ENCODE measurements at regions of chr16 and their contacts with region 1.

Region 1: DNA sequence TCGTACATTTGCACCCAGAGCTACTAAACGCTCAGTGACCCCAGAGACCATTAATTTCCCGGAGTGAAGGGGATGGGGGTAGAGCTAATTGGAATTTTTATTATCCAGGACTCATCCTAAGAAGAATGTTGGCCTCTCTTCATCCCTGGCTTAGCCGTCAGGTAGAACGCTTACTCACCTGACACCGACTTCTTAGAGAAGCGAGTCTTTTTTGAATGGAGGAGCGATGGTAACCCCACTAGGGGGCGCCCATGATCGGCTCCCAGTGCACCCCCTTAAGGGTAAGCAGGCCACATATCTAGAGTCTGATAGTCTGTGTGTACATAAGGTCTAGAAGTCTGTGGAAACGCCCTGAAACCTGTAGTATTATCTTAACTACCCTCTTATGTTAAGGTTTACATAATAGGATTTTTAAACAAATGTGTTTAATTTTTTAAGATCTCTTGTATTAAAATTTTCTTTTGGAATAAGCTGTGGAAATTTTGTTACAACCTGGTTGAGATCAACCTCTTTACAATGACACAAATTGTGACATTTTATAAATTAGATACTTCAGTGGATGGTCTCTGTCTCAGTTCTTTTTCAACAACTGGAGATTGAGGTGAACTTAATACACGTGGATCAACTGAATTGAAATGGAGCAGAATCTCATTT is 229.8 kb downstream of the CPPED1 start:
- DNase-seq: peak; percentile 73 to 80 (median 73)
- ATAC-seq: peak; percentile 77 to 85 (median 84)
- H3K4me3 ChIP-seq: no peak overlapping the region
- H3K27ac ChIP-seq: no peak overlapping the region
- H3K4me1 ChIP-seq: peaks cover 0 to 15% (median 4%) of the 10 kb centered on the region in 4 donors
- H3K27me3 ChIP-seq: no peaks in the 10 kb centered on the region
- CTCF ChIP-seq: peak; percentile 71 to 89 (median 84)
- POLR2A ChIP-seq: no peak

Region 2: DNA sequence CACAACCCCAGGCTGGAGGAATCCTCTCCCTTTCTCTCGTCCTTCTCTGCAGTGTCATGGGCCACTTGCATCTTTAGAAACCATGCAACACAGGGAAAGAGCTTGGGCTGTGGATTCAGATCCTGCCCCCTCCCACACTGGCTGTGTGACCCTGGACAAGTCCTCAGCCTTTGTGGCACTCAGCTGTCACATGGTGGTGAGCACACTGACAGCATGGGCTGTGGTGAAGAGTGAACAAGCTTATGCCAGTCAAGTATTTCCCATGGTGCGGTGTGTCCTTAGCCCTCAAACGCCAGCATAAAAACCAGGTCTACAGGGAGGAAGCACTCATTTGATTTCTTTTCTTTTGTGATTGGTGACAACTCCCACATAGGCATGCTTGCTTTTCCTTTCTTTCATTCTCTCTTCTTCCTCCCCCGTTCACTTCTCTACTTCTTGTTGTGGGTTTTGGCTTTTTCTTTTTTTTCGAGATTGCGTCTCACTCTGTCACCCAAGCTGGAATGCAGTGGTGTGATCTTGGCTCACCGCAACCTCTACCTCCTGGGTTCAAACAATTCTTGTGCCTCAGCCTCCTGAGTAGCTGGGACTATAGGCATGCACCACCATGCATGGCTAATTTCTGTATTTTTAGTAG is 84.4 kb before region 1 on chr16:
- intact Hi-C with region 1: no loop called
- DNase-seq: no peak
- ATAC-seq: no peak
- H3K4me3 ChIP-seq: no peak overlapping the region
- H3K27ac ChIP-seq: no peak overlapping the region
- H3K4me1 ChIP-seq: no peaks in the 10 kb centered on the region
- H3K27me3 ChIP-seq: no peaks in the 10 kb centered on the region
- CTCF ChIP-seq: no peak
- POLR2A ChIP-seq: no peak

Region 3: DNA sequence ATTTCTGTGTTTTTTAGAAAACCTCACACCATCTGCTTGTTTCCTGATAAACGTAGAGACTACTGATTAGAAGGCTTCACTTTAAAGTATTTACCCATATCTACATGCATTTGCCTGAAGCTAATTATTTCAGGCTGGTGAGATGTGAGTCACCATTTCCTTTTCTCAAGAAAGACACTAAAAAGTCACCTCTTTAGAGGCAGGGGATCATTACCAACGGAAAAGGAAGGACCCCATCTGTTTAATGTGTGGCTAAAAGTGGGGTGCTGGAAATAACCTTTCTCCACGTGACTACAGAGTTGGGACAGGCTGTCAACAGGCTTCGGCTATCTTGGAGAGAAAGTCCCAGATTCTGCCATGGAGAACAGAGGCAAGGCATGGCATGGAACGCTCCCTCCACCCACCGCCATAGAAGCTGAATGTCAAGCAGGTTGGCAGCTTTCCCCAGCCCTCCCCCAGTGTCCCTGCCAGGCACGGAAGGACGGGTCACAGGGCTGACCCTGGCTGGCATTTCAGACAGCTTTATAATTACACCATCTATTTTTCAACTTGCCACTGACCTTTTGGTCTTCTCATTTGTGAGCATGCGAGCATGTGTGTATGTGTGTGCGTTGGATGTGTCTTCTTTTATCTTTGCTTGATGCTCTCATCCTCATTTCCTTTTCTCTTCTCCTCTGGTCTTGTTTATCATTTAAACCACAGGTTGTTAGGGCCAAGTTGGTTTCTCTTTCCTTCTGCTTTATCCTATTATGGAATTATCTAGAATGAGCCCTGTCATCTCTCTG is 72.8 kb after region 1 on chr16:
- intact Hi-C with region 1: no loop called
- DNase-seq: peak; percentile 86 to 91 (median 90)
- ATAC-seq: peak; percentile 73 to 91 (median 80)
- H3K4me3 ChIP-seq: no peak overlapping the region
- H3K27ac ChIP-seq: peak overlapping the region; percentile 2 to 68 (median 37)
- H3K4me1 ChIP-seq: peaks cover 0 to 43% (median 5%) of the 10 kb centered on the region in 4 donors
- H3K27me3 ChIP-seq: no peaks in the 10 kb centered on the region
- CTCF ChIP-seq: no peak
- POLR2A ChIP-seq: no peak

Region 4: GRCh38 chr16:12794486-12795387 is 220.9 kb after region 1 on chr16:
- intact Hi-C with region 1: no loop called
- DNase-seq: no peak
- ATAC-seq: peak in 2 of 4 donors; percentile 32 to 36
- H3K4me3 ChIP-seq: no peak overlapping the region
- H3K27ac ChIP-seq: no peak overlapping the region
- H3K4me1 ChIP-seq: peaks cover 0 to 16% (median 5%) of the 10 kb centered on the region in 4 donors
- H3K27me3 ChIP-seq: no peaks in the 10 kb centered on the region
- CTCF ChIP-seq: no peak
- POLR2A ChIP-seq: no peak

Region 5: GRCh38 chr16:12819126-12820117 is 245.6 kb after region 1 on chr16:
- intact Hi-C with region 1: loop called (anchors 10 kb)
- DNase-seq: peak; percentile 74 to 83 (median 75)
- ATAC-seq: peak; percentile 89 to 97 (median 93)
- H3K4me3 ChIP-seq: no peak overlapping the region
- H3K27ac ChIP-seq: no peak overlapping the region
- H3K4me1 ChIP-seq: peaks cover 0 to 1% (median 0%) of the 10 kb centered on the region in 4 donors
- H3K27me3 ChIP-seq: no peaks in the 10 kb centered on the region
- CTCF ChIP-seq: peak; percentile 82 to 95 (median 90)
- POLR2A ChIP-seq: no peak

Measured in right lobe of liver (tissue), 6 donors.